Naive thymus-derived CD4-positive, alpha-beta T cell (primary cell): ENCODE measurements at regions of chr6 and their contacts with region 1.

Region 1: GRCh38 chr6:14210663-14211561 is 93.3 kb downstream of the CD83 start:
- DNase-seq: peak; percentile 79 to 98 (median 87)
- ATAC-seq: peak; percentile 95
- H3K4me3 ChIP-seq: peak overlapping the region; percentile 73
- H3K4me3 Mint-ChIP-seq: peak overlapping the region; percentile 81 to 90 (median 87)
- H3K27ac ChIP-seq: peak overlapping the region; percentile 65
- H3K27ac Mint-ChIP-seq: peak overlapping the region; percentile 6 to 93 (median 73)
- H3K4me1 ChIP-seq: peaks cover 8 to 14% of the 10 kb centered on the region in 2 donors
- H3K4me1 Mint-ChIP-seq: peaks cover 0 to 15% (median 11%) of the 10 kb centered on the region in 7 donors
- H3K27me3 ChIP-seq: no peaks in the 10 kb centered on the region
- H3K27me3 Mint-ChIP-seq: no peaks in the 10 kb centered on the region

Region 2: DNA sequence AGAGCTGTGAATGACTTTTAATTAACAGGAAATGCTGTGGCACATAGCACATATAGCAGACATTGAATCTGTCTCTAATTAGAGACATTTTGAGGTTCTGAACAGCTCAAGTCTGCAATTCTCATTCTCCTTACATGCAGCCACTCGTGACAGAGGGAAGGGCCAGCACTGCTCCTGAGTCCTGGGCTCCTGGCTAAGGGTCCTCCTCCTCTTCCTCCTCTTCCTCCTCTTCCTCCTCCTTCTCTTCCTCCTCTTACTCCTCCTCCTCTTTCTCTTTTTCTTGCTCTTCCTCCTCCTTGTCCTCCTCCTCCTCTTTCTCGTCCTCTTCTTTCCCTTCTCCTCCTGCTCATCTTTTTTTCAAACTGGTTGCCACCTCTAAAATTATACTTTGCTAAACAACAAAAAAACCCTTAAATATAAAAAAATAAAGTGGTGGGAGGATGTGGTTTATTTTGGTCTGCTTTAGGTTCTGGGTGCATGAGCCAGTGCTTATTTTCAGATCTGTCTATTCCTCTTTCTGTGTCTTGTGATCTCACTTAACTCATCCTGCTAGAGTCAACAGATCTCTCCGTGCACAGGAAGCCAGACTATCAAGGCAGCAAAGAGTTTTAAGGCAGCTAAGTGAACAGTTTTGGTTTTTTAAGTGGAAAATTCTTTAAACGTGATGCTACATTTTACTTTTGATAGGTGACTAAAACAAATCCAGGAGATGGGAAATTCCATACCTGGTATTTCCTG is 65.9 kb after region 1 on chr6:
- CTCF ChIA-PET with region 1: interaction called, 8 read pairs
- POLR2A ChIA-PET with region 1: interaction called, 3 read pairs
- intact Hi-C with region 1: loop called (anchors 1 to 2 kb)
- DNase-seq: peak in 7 of 9 donors; percentile 73 to 90 (median 85)
- ATAC-seq: peak; percentile 99
- H3K4me3 ChIP-seq: peak overlapping the region; percentile 34
- H3K4me3 Mint-ChIP-seq: peak overlapping the region; percentile 72 to 96 (median 80)
- H3K27ac ChIP-seq: peak overlapping the region; percentile 47
- H3K27ac Mint-ChIP-seq: peak overlapping the region; percentile 82 to 97 (median 91)
- H3K4me1 ChIP-seq: peaks cover 20 to 39% of the 10 kb centered on the region in 2 donors
- H3K4me1 Mint-ChIP-seq: peaks cover 33 to 64% (median 55%) of the 10 kb centered on the region in 7 donors
- H3K27me3 ChIP-seq: no peaks in the 10 kb centered on the region
- H3K27me3 Mint-ChIP-seq: no peaks in the 10 kb centered on the region

Region 3: DNA sequence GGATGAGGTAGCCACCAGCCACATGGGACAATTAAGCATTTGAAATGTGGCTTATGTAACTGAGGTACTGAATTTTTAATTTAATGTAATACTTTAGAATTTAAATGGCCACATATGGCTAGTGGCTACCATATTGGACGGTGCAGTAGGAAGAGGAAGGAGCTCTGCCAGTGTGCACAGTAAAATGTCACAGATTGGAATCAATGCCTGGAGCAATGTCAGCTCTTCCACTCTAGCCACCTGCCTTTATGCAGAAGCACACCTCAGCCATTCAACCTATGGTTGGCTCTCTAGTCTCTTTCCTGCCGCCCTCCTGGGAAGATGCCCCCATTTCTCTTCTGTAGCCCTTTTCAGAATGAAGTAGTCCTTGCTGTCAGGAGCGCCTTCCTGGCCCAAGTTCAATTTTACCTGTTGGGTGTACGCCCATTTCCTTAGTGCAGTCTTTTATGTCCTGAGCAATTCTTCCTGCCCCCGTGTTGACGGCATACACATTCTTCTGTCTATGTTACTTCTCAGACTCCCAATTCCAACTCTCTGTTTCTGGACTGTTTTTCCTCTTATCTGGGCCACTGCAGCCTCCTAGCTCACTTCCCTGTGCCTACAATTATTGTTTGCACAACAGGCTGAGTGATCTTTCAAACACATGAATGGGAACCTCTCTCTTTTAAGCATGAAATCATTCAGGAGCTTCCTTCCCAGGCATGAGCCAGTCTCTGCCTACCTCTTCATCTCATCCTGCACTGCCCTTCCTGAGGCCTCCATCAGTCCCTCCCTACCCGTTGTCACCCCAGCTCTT is 295.7 kb after region 1 on chr6:
- CTCF ChIA-PET with region 1: no interaction called
- POLR2A ChIA-PET with region 1: no interaction called
- intact Hi-C with region 1: loop called in 1 of 2 experiments (anchors 5 kb)
- DNase-seq: peak in 6 of 9 donors; percentile 12 to 53 (median 38)
- ATAC-seq: peak; percentile 54
- H3K4me3 ChIP-seq: no peak overlapping the region
- H3K4me3 Mint-ChIP-seq: peak overlapping the region in 7 of 10 donors; percentile 13 to 69 (median 53)
- H3K27ac ChIP-seq: no peak overlapping the region
- H3K27ac Mint-ChIP-seq: peak overlapping the region in 6 of 9 donors; percentile 1 to 76 (median 13)
- H3K4me1 ChIP-seq: peaks cover 0 to 16% of the 10 kb centered on the region in 2 donors
- H3K4me1 Mint-ChIP-seq: peaks cover 7 to 36% (median 24%) of the 10 kb centered on the region in 7 donors
- H3K27me3 ChIP-seq: no peaks in the 10 kb centered on the region
- H3K27me3 Mint-ChIP-seq: no peaks in the 10 kb centered on the region

Region 4: DNA sequence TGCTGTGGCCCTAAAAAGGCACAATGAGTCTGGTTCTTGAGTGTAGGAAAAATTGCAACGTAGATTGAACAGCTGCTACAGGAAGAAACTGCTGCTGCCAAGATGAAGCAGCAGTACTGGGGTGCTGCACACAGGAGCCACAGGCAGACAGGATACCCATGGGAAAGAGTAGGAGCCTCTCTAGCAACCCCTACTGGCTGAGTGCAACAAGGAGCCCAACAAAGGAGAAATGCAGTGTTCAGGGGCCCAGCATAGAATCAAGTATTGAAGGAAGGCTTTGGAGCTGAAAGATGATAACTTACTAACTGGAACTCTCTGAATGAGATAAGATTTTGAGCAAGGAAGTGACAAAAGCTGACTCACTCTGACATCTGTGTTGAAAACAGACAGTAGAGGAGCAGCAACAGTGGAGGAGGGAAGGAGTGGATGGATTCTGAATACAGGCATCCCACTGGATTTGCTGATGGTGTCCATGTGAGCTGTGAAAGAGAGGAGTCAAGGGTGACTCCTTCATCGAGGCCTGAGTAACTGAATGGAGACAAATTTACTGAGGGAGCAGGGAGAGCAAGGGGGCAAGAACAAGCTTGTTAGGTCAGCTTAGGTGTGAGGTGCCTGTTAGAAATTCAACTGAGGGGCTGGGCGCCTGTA is 500.3 kb after region 1 on chr6:
- CTCF ChIA-PET with region 1: interaction called, 4 read pairs
- POLR2A ChIA-PET with region 1: no interaction called
- intact Hi-C with region 1: loop called in 1 of 2 experiments (anchors 1 kb)
- DNase-seq: peak in 6 of 9 donors; percentile 18 to 59 (median 26)
- ATAC-seq: peak; percentile 91
- H3K4me3 ChIP-seq: no peak overlapping the region
- H3K4me3 Mint-ChIP-seq: peak overlapping the region in 1 of 10 donors; percentile 27
- H3K27ac ChIP-seq: no peak overlapping the region
- H3K27ac Mint-ChIP-seq: peak overlapping the region in 2 of 9 donors; percentile 7 to 78
- H3K4me1 ChIP-seq: no peaks in the 10 kb centered on the region
- H3K4me1 Mint-ChIP-seq: peaks cover 5 to 24% (median 6%) of the 10 kb centered on the region in 7 donors
- H3K27me3 ChIP-seq: no peaks in the 10 kb centered on the region
- H3K27me3 Mint-ChIP-seq: peaks cover 0 to 4% (median 0%) of the 10 kb centered on the region in 5 donors

Region 5: GRCh38 chr6:15389765-15390723 is 1179.1 kb after region 1 on chr6:
- CTCF ChIA-PET with region 1: interaction called, 7 read pairs
- POLR2A ChIA-PET with region 1: no interaction called
- intact Hi-C with region 1: loop called (anchors 1 to 5 kb)
- DNase-seq: peak in 5 of 9 donors; percentile 15 to 36 (median 31)
- ATAC-seq: peak; percentile 39
- H3K4me3 ChIP-seq: no peak overlapping the region
- H3K4me3 Mint-ChIP-seq: peak overlapping the region in 9 of 10 donors; percentile 5 to 56 (median 41)
- H3K27ac ChIP-seq: no peak overlapping the region
- H3K27ac Mint-ChIP-seq: peak overlapping the region in 6 of 9 donors; percentile 17 to 62 (median 32)
- H3K4me1 ChIP-seq: peaks cover 0 to 24% of the 10 kb centered on the region in 2 donors
- H3K4me1 Mint-ChIP-seq: peaks cover 41 to 72% (median 66%) of the 10 kb centered on the region in 7 donors
- H3K27me3 ChIP-seq: no peaks in the 10 kb centered on the region
- H3K27me3 Mint-ChIP-seq: no peaks in the 10 kb centered on the region

Region 6: DNA sequence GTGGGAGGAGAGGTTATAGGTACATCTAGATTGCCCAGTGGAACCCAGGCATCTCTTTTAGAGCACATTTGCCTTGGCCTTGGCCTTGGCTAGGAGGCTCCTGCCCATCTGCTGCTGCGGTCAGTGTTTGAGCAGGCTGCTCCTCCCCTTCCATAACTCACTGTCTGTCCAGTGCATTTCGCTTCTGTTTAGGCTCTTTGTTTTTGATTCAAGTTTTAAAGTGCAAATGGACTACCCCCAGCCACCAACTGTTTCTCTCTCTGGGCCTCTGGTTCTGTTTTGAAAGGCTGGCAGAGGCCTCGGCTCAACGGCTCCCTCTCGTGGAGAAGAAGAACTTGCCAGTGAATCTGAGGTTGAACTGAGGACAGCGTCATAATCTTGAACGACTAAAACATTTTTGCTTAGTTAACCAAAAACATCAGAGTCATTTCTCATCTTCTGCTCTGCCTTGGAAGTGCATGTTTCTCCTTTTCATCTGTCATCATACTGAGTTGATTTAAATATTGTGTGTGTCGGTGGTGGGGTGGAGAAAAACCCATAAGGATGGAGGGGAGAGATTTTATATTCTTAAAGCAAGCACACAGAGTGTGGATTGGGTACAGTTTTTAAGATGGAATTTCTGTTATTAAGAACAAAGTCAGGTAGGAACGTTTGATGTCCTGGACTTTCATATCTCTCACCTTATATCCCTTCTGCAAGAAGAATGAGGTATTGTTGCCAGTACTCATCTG is 1280.5 kb after region 1 on chr6:
- CTCF ChIA-PET with region 1: interaction called, 4 read pairs
- POLR2A ChIA-PET with region 1: no interaction called
- intact Hi-C with region 1: loop called (anchors 1 kb)
- DNase-seq: peak; percentile 48 to 77 (median 70)
- ATAC-seq: peak; percentile 88
- H3K4me3 ChIP-seq: no peak overlapping the region
- H3K4me3 Mint-ChIP-seq: peak overlapping the region in 6 of 10 donors; percentile 2 to 17 (median 3)
- H3K27ac ChIP-seq: peak overlapping the region; percentile 2
- H3K27ac Mint-ChIP-seq: peak overlapping the region; percentile 29 to 88 (median 67)
- H3K4me1 ChIP-seq: peaks cover 0 to 11% of the 10 kb centered on the region in 2 donors
- H3K4me1 Mint-ChIP-seq: peaks cover 24 to 58% (median 41%) of the 10 kb centered on the region in 7 donors
- H3K27me3 ChIP-seq: no peaks in the 10 kb centered on the region
- H3K27me3 Mint-ChIP-seq: no peaks in the 10 kb centered on the region